Calu3 (cell line): ENCODE measurements at regions of chr15 and their contacts with region 1.

Region 1: DNA sequence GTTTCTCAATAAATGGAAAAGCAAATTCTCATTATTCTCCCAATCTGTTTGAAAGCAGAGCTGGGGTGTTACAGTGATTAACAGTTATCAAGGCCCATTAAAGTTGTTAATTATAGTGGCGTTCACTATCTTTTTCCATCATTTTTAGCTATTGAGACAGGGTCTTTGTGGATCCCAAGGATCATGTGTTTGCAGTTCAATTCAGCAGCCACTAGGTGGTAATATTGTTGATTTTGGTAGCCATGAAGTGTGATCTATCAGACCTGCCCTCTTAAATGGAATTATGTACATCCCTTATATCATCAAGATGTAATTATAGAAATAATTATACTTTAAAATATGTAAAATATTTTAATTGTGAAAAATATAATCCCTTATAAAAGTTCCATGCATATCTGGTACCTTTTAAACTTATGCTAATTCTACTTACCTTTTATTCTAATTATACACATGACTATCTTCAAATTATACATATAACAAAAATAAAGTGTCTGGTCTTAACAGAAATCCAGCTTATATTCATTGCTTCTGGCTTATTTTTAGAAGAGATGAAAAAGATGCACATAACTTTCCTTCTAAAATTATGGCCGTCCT is 126.4 kb downstream of the GREM1 start:
- DNase-seq: no peak
- H3K4me3 Mint-ChIP-seq: no peak overlapping the region
- H3K27ac Mint-ChIP-seq: no peak overlapping the region
- H3K4me1 Mint-ChIP-seq: no peaks in the 10 kb centered on the region
- H3K27me3 Mint-ChIP-seq: no peaks in the 10 kb centered on the region
- CTCF ChIP-seq: no peak

Region 2: GRCh38 chr15:32790352-32790999 is 53.7 kb before region 1 on chr15:
- CTCF ChIA-PET with region 1: no interaction called
- intact Hi-C with region 1: no loop called
- DNase-seq: no peak
- H3K4me3 Mint-ChIP-seq: no peak overlapping the region
- H3K27ac Mint-ChIP-seq: no peak overlapping the region
- H3K4me1 Mint-ChIP-seq: no peaks in the 10 kb centered on the region
- H3K27me3 Mint-ChIP-seq: no peaks in the 10 kb centered on the region
- CTCF ChIP-seq: no peak

Region 3: GRCh38 chr15:32956006-32956405 is 111.8 kb after region 1 on chr15:
- CTCF ChIA-PET with region 1: no interaction called
- intact Hi-C with region 1: loop called (anchors 10 kb)
- DNase-seq: peak; percentile 0
- H3K4me3 Mint-ChIP-seq: no peak overlapping the region
- H3K27ac Mint-ChIP-seq: no peak overlapping the region
- H3K4me1 Mint-ChIP-seq: no peaks in the 10 kb centered on the region
- H3K27me3 Mint-ChIP-seq: no peaks in the 10 kb centered on the region
- CTCF ChIP-seq: no peak

Region 4: DNA sequence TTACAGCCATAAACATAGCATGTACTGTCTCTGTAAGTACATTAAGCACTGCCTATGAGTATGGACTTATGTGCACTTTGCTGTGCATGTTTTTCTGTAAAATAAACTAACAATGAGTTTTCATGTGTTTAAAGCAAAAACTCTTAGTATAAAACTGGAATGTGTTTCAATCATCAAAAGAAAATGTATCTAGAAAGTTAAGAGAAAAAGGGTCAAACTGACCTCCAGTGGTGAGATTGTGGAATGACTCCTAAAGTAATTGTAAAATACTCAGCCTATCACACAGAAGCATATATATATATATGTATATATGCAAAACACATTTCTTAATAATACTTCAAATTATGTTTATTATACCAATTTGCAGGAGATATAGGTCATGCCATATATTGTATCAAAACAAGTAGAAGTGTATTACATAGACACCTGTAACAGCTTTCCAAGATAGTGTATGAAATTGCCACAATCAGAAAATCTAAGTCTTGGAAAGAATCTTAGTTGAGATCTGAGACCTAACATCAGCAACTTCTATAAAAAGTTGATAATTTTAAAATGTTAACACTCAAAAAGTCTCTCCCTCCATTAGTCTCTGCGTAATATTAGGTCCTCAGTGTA is 150.7 kb after region 1 on chr15:
- CTCF ChIA-PET with region 1: no interaction called
- intact Hi-C with region 1: loop called (anchors 10 kb)
- DNase-seq: no peak
- H3K4me3 Mint-ChIP-seq: no peak overlapping the region
- H3K27ac Mint-ChIP-seq: no peak overlapping the region
- H3K4me1 Mint-ChIP-seq: no peaks in the 10 kb centered on the region
- H3K27me3 Mint-ChIP-seq: no peaks in the 10 kb centered on the region
- CTCF ChIP-seq: no peak